ENCODE measurements at regions of chr17 and their contacts with region 1.

Region 1: GRCh38 chr17:30124273-30124796 is 7.7 kb downstream of the NSRP1 start:
- DNase-seq: no peak
- ATAC-seq: no peak
- H3K4me3 ChIP-seq: no peak overlapping the region
- H3K27ac ChIP-seq: no peak overlapping the region
- H3K4me1 ChIP-seq: peaks cover 7% of the 10 kb centered on the region; the same call in 1 of the 2 replicates
- H3K27me3 ChIP-seq: no peaks in the 10 kb centered on the region
- CTCF ChIP-seq: no peak
- EP300 ChIP-seq: no peak
- POLR2A ChIP-seq: no peak
- RAD21 ChIP-seq: no peak

Region 2: DNA sequence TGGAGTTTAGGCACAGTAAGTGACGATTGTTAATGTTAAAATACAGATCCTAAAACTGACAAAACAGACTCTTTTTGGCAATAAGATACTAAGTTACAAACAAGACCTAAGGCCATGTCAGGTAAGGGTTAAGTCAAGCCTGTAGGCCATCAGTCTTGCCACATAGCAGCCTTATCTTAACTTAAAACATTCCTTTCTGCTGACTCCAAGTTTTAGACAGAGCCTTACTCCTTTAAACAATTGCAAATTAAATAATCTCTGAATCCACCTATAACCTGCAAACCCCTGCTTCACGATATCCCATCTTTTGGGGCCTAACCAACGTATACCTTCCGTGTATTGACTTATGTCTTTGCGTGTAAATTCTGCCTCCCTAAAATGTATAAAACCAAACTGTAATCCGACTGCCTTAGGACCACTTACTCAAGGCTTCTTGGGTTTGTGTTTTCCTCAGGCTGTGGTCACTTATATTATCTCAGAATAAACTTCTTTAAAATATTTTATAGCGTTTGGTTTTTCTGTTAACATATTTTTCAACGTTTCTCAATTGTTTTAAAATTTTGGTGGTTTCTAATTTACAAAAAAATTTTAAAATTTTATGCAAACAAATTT is 118.5 kb before region 1 on chr17:
- CTCF ChIA-PET with region 1: no interaction called
- POLR2A ChIA-PET with region 1: no interaction called
- RAD21 ChIA-PET with region 1: no interaction called
- SMC1A ChIA-PET with region 1: no interaction called
- in situ Hi-C with region 1: no loop called
- intact Hi-C with region 1: no loop called
- DNase-seq: no peak
- ATAC-seq: no peak
- H3K4me3 ChIP-seq: no peak overlapping the region
- H3K27ac ChIP-seq: no peak overlapping the region
- H3K4me1 ChIP-seq: no peaks in the 10 kb centered on the region
- H3K27me3 ChIP-seq: no peaks in the 10 kb centered on the region
- CTCF ChIP-seq: no peak
- EP300 ChIP-seq: no peak
- POLR2A ChIP-seq: no peak
- RAD21 ChIP-seq: no peak

Region 3: DNA sequence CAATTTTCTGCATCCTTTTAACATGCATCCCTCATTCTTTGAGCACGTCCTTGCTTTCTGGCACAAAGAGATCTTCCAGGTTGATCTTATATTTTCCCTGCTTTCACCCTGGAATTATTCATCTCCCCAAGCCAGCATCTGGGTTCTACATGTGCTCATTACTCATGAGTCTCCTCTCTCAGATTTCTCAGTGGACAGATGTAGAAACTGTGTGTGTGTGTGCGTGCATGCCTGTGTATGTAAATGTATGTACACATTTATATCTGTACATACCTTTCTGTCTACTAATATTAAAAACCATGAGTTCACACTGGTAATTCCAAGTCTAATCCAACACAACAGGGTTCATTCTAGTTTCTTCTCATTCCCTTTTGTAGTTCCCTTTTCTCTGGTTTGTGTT is 49.6 kb before region 1 on chr17:
- CTCF ChIA-PET with region 1: no interaction called
- POLR2A ChIA-PET with region 1: no interaction called
- RAD21 ChIA-PET with region 1: no interaction called
- SMC1A ChIA-PET with region 1: no interaction called
- in situ Hi-C with region 1: no loop called
- intact Hi-C with region 1: no loop called
- DNase-seq: no peak
- ATAC-seq: no peak
- H3K4me3 ChIP-seq: no peak overlapping the region
- H3K27ac ChIP-seq: no peak overlapping the region
- H3K4me1 ChIP-seq: no peaks in the 10 kb centered on the region
- H3K27me3 ChIP-seq: peaks cover 0 to 5% of the 10 kb centered on the region in 2 experiments; a peak in 1 of 4 replicates
- CTCF ChIP-seq: no peak
- EP300 ChIP-seq: no peak
- POLR2A ChIP-seq: no peak
- RAD21 ChIP-seq: no peak

Region 4: DNA sequence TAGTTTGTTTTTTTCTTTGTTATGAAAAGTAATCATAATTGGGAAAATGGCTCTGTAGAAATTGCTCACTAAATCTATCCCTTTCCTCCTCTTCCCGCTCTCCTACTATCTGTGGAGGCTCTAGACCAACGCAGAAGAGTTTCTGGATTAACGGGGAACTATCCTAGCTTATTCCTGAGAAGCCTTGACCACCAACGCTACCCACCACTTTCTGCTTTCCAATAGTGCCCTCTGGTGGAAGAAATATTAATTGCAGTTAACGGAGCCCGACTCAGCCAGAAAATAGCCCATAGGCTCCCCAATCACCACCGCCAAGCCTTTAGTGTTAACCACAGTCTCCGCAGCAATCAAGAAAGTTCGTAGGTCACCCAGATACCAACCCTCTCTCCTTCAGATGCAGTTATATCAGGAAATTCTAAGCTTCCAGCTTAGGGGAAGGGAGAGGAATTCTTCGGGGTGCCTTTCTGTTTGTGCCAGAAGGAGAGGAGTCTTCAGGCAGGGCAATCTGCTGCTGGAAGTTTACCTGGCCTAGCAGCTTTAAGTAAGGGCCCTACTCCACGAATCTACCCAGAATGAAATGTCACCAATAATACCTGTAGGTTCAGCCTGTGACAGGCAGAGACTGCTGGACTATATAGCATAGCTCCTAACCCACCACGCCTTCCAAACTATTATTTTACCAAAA is 30.7 kb before region 1 on chr17:
- CTCF ChIA-PET with region 1: interaction called, 15 read pairs
- POLR2A ChIA-PET with region 1: no interaction called
- RAD21 ChIA-PET with region 1: interaction called, 6 read pairs
- SMC1A ChIA-PET with region 1: interaction called, 4 read pairs
- in situ Hi-C with region 1: no loop called
- intact Hi-C with region 1: no loop called
- DNase-seq: peak; percentile 32
- ATAC-seq: peak; percentile 88
- H3K4me3 ChIP-seq: no peak overlapping the region
- H3K27ac ChIP-seq: no peak overlapping the region
- H3K4me1 ChIP-seq: peaks cover 3% of the 10 kb centered on the region; the same call in 1 of the 2 replicates
- H3K27me3 ChIP-seq: no peaks in the 10 kb centered on the region; a peak in 1 of 4 replicates
- CTCF ChIP-seq: peak; percentile 63 to 82 (median 70); a peak in 5 of 6 replicates
- EP300 ChIP-seq: no peak
- POLR2A ChIP-seq: no peak
- RAD21 ChIP-seq: peak; percentile 88

Region 5: GRCh38 chr17:30148376-30148775 is 24.0 kb after region 1 on chr17:
- CTCF ChIA-PET with region 1: interaction called, 15 read pairs
- POLR2A ChIA-PET with region 1: no interaction called
- RAD21 ChIA-PET with region 1: interaction called, 4 read pairs
- SMC1A ChIA-PET with region 1: interaction called, 16 read pairs
- in situ Hi-C with region 1: no loop called
- intact Hi-C with region 1: no loop called
- DNase-seq: no peak
- ATAC-seq: no peak
- H3K4me3 ChIP-seq: no peak overlapping the region
- H3K27ac ChIP-seq: no peak overlapping the region; the same call in 1 of the 2 replicates
- H3K4me1 ChIP-seq: no peaks in the 10 kb centered on the region; the same call in 1 of the 2 replicates
- H3K27me3 ChIP-seq: no peaks in the 10 kb centered on the region
- CTCF ChIP-seq: no peak
- EP300 ChIP-seq: no peak
- POLR2A ChIP-seq: no peak
- RAD21 ChIP-seq: no peak

Region 6: GRCh38 chr17:30187573-30187972 is 63.2 kb after region 1 on chr17:
- CTCF ChIA-PET with region 1: interaction called, 9 read pairs
- POLR2A ChIA-PET with region 1: no interaction called
- RAD21 ChIA-PET with region 1: interaction called, 5 read pairs
- SMC1A ChIA-PET with region 1: interaction called, 10 read pairs
- in situ Hi-C with region 1: no loop called
- intact Hi-C with region 1: no loop called
- DNase-seq: no peak
- ATAC-seq: no peak
- H3K4me3 ChIP-seq: no peak overlapping the region
- H3K27ac ChIP-seq: no peak overlapping the region
- H3K4me1 ChIP-seq: no peaks in the 10 kb centered on the region
- H3K27me3 ChIP-seq: no peaks in the 10 kb centered on the region
- CTCF ChIP-seq: no peak
- EP300 ChIP-seq: no peak
- POLR2A ChIP-seq: no peak
- RAD21 ChIP-seq: no peak

Region 7: GRCh38 chr17:30226878-30227277 is 102.5 kb after region 1 on chr17:
- CTCF ChIA-PET with region 1: interaction called, 11 read pairs
- POLR2A ChIA-PET with region 1: no interaction called
- RAD21 ChIA-PET with region 1: interaction called, 5 read pairs
- SMC1A ChIA-PET with region 1: interaction called, 4 read pairs
- in situ Hi-C with region 1: no loop called
- intact Hi-C with region 1: no loop called
- DNase-seq: no peak
- ATAC-seq: no peak
- H3K4me3 ChIP-seq: no peak overlapping the region
- H3K27ac ChIP-seq: no peak overlapping the region
- H3K4me1 ChIP-seq: no peaks in the 10 kb centered on the region
- H3K27me3 ChIP-seq: no peaks in the 10 kb centered on the region
- CTCF ChIP-seq: no peak
- EP300 ChIP-seq: no peak
- POLR2A ChIP-seq: no peak
- RAD21 ChIP-seq: no peak

Region 8: DNA sequence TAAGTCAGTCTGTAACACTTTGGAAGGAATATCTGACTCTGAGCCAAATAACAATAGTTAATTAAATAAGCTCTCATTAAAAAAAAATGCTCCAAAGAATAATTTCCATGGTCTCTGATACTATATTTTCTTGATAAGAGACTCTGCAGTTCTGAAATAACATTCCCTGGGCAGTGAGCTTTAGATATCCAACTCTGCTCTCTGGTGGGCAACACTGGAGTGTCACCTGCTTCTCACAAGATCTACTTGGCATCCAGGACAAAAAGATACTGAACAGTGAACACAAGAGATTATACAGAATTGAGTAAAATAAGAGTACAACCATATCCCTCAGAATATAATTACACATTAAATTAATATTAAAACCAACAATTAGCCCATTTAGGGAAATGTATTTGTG is 153.7 kb after region 1 on chr17:
- CTCF ChIA-PET with region 1: interaction called, 18 read pairs
- POLR2A ChIA-PET with region 1: no interaction called
- RAD21 ChIA-PET with region 1: interaction called, 5 read pairs
- SMC1A ChIA-PET with region 1: interaction called, 14 read pairs
- in situ Hi-C with region 1: no loop called
- intact Hi-C with region 1: loop called (anchors 5 kb)
- DNase-seq: no peak
- ATAC-seq: peak; percentile 52; the same call in 2 of the 3 replicates
- H3K4me3 ChIP-seq: no peak overlapping the region
- H3K27ac ChIP-seq: no peak overlapping the region
- H3K4me1 ChIP-seq: no peaks in the 10 kb centered on the region; the same call in 1 of the 2 replicates
- H3K27me3 ChIP-seq: no peaks in the 10 kb centered on the region
- CTCF ChIP-seq: peak; percentile 36 to 53 (median 38); a peak in 5 of 6 replicates
- EP300 ChIP-seq: no peak
- POLR2A ChIP-seq: no peak
- RAD21 ChIP-seq: peak; percentile 69

Region 9: DNA sequence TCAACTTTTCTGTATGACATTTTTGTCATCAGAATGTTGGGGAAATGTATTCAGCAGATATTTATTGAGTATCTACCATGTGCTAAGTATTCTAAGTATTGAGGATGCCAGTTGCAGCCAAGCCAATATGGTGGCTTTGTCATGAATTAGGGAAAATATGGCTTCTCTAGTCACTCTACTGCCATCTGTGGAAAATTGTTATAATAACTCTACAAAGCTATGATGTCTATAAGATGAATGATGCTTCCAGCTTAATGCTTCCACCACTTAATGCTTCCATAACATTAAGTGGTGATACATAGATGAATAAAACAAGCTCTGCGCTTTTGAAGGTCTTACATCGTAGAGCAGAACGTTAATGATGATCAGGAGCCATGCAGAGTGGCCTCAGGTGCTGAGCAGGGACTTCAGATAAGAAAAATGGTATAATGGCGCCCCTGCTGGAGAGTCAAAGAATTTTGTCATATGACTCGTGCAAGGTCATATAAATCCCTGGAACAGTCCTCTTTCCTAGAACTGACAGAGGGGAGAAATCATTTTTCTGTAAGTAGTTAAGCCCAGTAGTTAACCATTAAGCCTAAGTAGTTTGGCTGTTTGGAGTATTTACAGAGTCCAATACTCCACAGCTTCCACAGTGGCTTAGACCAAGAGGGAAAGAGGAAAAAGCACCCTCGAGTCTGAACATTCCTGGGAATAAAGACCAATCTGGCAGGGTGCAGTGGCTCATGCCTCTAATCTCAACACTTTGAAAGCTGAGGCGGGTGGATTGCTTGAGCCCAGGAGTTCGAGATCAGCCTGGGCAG is 212.2 kb after region 1 on chr17:
- CTCF ChIA-PET with region 1: interaction called, 204 read pairs
- POLR2A ChIA-PET with region 1: interaction called, 9 read pairs
- RAD21 ChIA-PET with region 1: interaction called, 92 read pairs
- SMC1A ChIA-PET with region 1: interaction called, 125 read pairs
- in situ Hi-C with region 1: no loop called
- intact Hi-C with region 1: loop called (anchors 5 kb)
- DNase-seq: no peak
- ATAC-seq: peak; percentile 58
- H3K4me3 ChIP-seq: no peak overlapping the region
- H3K27ac ChIP-seq: no peak overlapping the region
- H3K4me1 ChIP-seq: peaks cover 12% of the 10 kb centered on the region
- H3K27me3 ChIP-seq: no peaks in the 10 kb centered on the region
- CTCF ChIP-seq: peak; percentile 57 to 86 (median 63); a peak in 5 of 6 replicates
- EP300 ChIP-seq: no peak
- POLR2A ChIP-seq: no peak
- RAD21 ChIP-seq: peak; percentile 78